ENCODE measurements at regions of chr1 and their contacts with region 1.

Region 1: DNA sequence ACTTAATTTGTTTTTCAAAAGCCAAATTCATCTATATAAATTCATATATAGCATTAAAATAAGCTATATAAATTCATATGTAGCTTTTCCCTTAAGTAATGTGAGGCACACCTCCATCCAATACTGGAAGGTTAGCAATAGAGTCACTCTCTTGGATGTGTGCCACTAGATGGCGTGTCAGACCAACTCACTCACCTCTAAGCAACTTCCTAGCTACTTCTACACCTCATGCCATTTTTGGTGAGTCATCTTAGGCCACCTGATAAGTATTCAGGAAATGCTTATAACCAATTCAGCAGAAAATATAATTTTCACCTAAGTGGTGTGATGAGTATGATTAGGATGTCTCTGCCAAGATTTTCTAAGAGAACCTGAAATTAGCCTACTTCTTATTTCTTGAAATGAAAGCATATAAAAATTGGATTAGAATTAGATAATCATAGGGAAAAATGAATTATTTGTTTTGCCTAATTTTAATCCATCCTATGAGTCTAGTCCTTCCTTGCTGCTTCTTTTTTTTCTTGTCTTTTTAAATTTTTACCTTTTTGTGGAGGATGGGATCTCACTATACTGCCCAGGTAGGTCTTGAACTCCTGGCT is 34.4 kb upstream of the TADA1 start:
- DNase-seq: peak; percentile 21 to 80 (median 74)
- ATAC-seq: peak; percentile 99
- H3K4me3 ChIP-seq: no peak overlapping the region
- H3K4me3 Mint-ChIP-seq: no peak overlapping the region
- H3K27ac ChIP-seq: no peak overlapping the region
- H3K27ac Mint-ChIP-seq: peak overlapping the region in 1 of 9 donors; percentile 12
- H3K4me1 ChIP-seq: no peaks in the 10 kb centered on the region
- H3K4me1 Mint-ChIP-seq: peaks cover 0 to 31% (median 4%) of the 10 kb centered on the region in 7 donors
- H3K27me3 ChIP-seq: no peaks in the 10 kb centered on the region
- H3K27me3 Mint-ChIP-seq: peaks cover 0 to 6% (median 0%) of the 10 kb centered on the region in 5 donors

Region 2: GRCh38 chr1:166197141-166197540 is 713.4 kb before region 1 on chr1:
- CTCF ChIA-PET with region 1: no interaction called
- POLR2A ChIA-PET with region 1: no interaction called
- intact Hi-C with region 1: no loop called
- DNase-seq: no peak
- ATAC-seq: no peak
- H3K4me3 ChIP-seq: no peak overlapping the region
- H3K4me3 Mint-ChIP-seq: no peak overlapping the region
- H3K27ac ChIP-seq: no peak overlapping the region
- H3K27ac Mint-ChIP-seq: no peak overlapping the region
- H3K4me1 ChIP-seq: no peaks in the 10 kb centered on the region
- H3K4me1 Mint-ChIP-seq: peaks cover 0 to 2% (median 0%) of the 10 kb centered on the region in 7 donors
- H3K27me3 ChIP-seq: peaks cover 0 to 7% of the 10 kb centered on the region in 2 donors
- H3K27me3 Mint-ChIP-seq: peaks cover 0 to 29% (median 11%) of the 10 kb centered on the region in 5 donors

Region 3: DNA sequence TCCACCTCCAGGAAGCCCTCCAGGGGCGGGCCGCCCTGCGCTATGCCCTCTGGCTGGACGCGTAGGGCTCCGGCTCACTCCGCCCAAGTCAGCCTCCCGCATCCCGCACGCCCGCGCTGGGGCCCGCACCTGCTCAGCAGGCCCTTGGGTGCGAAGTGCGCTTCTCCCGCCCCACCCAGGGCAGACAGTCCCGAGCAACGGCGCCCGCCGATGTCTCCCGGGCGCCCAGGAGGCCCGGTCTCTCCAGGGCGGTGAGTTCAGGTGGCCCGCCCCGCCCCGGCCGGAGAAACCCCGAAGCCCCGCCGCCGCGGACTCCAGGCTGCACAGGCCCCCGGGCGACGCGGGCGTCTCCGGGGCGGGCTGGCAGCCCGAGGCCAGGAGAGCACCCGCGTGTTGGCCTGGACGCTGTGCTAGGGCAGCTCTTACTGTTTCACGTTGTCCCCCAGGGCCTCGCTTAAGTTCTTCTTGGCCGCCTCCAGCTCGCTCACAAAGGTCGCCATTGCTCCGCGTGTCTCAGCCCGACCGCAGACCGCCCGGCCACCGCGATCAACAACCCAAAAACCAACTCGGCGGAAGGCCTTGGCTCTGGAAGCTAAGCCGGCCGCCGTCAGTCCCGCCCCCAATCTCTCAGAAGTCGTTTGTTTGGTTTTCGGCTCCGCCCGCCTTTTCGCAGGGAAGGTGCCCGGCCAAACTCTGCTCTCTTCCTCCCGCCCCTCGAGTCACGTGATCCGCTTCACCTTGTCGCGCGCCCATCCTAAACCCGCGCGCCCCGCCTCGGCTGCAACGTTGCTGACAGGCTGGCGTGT is 34.6 kb before region 1 on chr1 and contains the start of gene TADA1:
- CTCF ChIA-PET with region 1: interaction called, 3 read pairs
- POLR2A ChIA-PET with region 1: no interaction called
- intact Hi-C with region 1: loop called (anchors 1 to 2 kb)
- DNase-seq: peak; percentile 87 to 97 (median 96)
- ATAC-seq: peak; percentile 95
- H3K4me3 ChIP-seq: peak within 1 kb of the TSS; percentile 64
- H3K4me3 Mint-ChIP-seq: peak within 1 kb of the TSS; percentile 93 to 100 (median 96)
- H3K27ac ChIP-seq: peak within 1 kb of the TSS; percentile 83
- H3K27ac Mint-ChIP-seq: peak within 1 kb of the TSS; percentile 75 to 99 (median 98)
- H3K4me1 ChIP-seq: peaks cover 10 to 12% of the 10 kb centered on the region in 2 donors
- H3K4me1 Mint-ChIP-seq: peaks cover 43 to 63% (median 55%) of the 10 kb centered on the region in 7 donors
- H3K27me3 ChIP-seq: no peaks in the 10 kb centered on the region
- H3K27me3 Mint-ChIP-seq: peaks cover 0 to 11% (median 0%) of the 10 kb centered on the region in 5 donors
- total RNA-seq, gene TADA1: 9.4 to 16.2 (median 15.6) TPM

Region 4: GRCh38 chr1:167059045-167059808 is 148.7 kb after region 1 on chr1:
- CTCF ChIA-PET with region 1: interaction called, 354 read pairs
- POLR2A ChIA-PET with region 1: interaction called, 23 read pairs
- intact Hi-C with region 1: loop called (anchors 1 kb)
- DNase-seq: peak; percentile 38 to 75 (median 57)
- ATAC-seq: peak; percentile 78
- H3K4me3 ChIP-seq: no peak overlapping the region
- H3K4me3 Mint-ChIP-seq: no peak overlapping the region
- H3K27ac ChIP-seq: no peak overlapping the region
- H3K27ac Mint-ChIP-seq: peak overlapping the region in 6 of 9 donors; percentile 5 to 55 (median 25)
- H3K4me1 ChIP-seq: peaks cover 0 to 4% of the 10 kb centered on the region in 2 donors
- H3K4me1 Mint-ChIP-seq: peaks cover 0 to 8% (median 6%) of the 10 kb centered on the region in 7 donors
- H3K27me3 ChIP-seq: no peaks in the 10 kb centered on the region
- H3K27me3 Mint-ChIP-seq: no peaks in the 10 kb centered on the region

Region 5: DNA sequence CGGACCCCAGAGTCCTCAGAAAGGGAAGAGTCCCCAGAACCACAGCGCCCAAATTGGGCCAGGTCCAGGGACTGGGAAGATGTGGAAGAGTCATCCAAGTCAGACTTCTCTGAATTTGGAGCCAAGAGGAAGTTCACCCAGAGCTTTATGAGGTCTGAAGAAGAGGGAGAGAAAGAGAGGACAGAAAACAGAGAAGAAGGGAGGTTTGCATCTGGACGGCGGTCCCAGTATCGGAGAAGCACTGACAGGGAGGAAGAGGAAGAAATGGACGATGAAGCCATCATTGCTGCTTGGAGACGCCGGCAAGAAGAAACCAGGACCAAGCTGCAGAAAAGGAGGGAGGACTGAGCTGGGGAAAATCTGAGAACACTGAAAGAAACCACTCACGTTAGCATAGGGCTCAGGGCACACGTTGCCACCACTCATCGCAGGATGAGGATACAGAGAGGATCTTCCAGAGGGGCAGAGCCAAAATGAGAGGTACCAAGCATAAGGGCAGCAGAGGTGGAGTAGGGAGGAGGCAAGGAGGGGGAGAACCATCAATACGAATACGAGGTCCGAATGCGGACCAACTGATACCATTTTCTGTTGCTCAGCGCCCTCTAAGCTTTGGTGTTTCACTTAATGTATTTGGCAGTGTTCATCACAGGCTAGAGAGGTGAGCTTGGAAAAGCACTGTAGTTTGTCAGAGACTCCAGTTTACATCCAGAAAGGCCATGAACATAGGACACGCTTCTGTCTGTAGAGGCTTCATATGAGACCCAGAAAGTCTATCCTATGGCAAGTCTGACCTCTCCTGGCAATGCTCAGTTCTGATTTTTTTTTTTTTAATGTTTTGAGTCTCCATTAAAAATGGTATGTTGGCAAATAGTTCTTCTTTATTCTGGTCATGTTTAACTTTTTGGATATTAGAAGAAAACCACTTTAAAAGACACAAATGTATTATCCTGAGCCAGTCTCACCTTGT is 218.0 kb after region 1 on chr1:
- CTCF ChIA-PET with region 1: interaction called, 20 read pairs
- POLR2A ChIA-PET with region 1: no interaction called
- intact Hi-C with region 1: loop called (anchors 1 to 5 kb)
- DNase-seq: peak in 3 of 9 donors; percentile 19 to 29 (median 20)
- ATAC-seq: no peak
- H3K4me3 ChIP-seq: no peak overlapping the region
- H3K4me3 Mint-ChIP-seq: no peak overlapping the region
- H3K27ac ChIP-seq: no peak overlapping the region
- H3K27ac Mint-ChIP-seq: peak overlapping the region in 1 of 9 donors; percentile 1
- H3K4me1 ChIP-seq: no peaks in the 10 kb centered on the region
- H3K4me1 Mint-ChIP-seq: peaks cover 0 to 4% (median 0%) of the 10 kb centered on the region in 7 donors
- H3K27me3 ChIP-seq: no peaks in the 10 kb centered on the region
- H3K27me3 Mint-ChIP-seq: peaks cover 12 to 43% (median 24%) of the 10 kb centered on the region in 5 donors

Region 6: GRCh38 chr1:167401260-167401873 is 490.9 kb after region 1 on chr1:
- CTCF ChIA-PET with region 1: no interaction called
- POLR2A ChIA-PET with region 1: no interaction called
- intact Hi-C with region 1: loop called in 1 of 2 experiments (anchors 10 kb)
- DNase-seq: peak in 8 of 9 donors; percentile 28 to 55 (median 40)
- ATAC-seq: peak; percentile 75
- H3K4me3 ChIP-seq: no peak overlapping the region
- H3K4me3 Mint-ChIP-seq: no peak overlapping the region
- H3K27ac ChIP-seq: no peak overlapping the region
- H3K27ac Mint-ChIP-seq: peak overlapping the region in 2 of 9 donors; percentile 23 to 69
- H3K4me1 ChIP-seq: no peaks in the 10 kb centered on the region
- H3K4me1 Mint-ChIP-seq: peaks cover 0 to 13% (median 9%) of the 10 kb centered on the region in 7 donors
- H3K27me3 ChIP-seq: no peaks in the 10 kb centered on the region
- H3K27me3 Mint-ChIP-seq: no peaks in the 10 kb centered on the region

Measured in naive thymus-derived CD4-positive, alpha-beta T cell (primary cell).